Prostate gland (tissue), 2 donors: ENCODE measurements at regions of chr11 and their contacts with region 1.

Region 1: GRCh38 chr11:18731949-18732821 is 6.2 kb upstream of the IGSF22 start:
- DNase-seq: peak; percentile 41
- H3K4me3 ChIP-seq: no peak overlapping the region
- H3K27ac ChIP-seq: no peak overlapping the region
- H3K4me1 ChIP-seq: no peaks in the 10 kb centered on the region
- H3K27me3 ChIP-seq: no peaks in the 10 kb centered on the region
- CTCF ChIP-seq: peak; percentile 80 to 94 (median 84)
- POLR2A ChIP-seq: no peak

Region 2: DNA sequence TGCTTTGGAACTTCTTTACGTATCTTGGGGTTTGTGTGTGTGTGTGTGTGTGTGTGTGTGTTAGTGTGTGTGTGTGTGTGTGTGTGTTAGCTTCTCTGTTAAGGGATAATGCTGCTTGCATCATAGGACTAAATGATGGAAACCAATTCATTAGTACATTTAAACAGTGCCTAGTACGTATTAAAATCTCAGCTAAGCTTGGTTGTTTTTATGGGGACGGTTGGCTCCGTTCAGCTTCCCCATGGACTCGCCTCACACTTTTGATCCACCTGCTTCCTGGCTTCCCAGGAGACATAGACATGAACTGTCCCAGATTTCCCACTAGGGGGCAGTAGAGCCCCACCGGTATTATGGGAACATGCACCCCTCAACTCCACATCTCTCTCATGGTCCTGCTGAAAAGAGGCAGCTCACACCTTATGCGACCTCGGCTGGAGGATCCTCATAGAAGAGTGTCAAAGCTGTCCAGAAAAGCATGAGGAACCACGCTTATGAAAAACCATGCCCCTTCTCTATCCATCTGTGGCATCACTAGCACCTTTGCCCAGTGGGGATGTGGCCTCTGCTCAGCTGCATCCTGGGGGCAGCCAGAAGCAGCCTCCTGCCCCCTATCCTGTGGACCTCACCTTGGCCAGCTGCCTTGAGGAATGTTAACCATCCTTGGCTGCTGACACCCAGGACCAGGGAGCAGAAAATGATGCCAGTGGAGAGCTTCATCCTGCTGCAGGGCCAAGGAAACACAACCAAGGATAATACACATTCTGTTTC is 616.6 kb before region 1 on chr11:
- intact Hi-C with region 1: loop called (anchors 10 kb)
- DNase-seq: peak; percentile 36
- H3K4me3 ChIP-seq: no peak overlapping the region
- H3K27ac ChIP-seq: no peak overlapping the region
- H3K4me1 ChIP-seq: no peaks in the 10 kb centered on the region
- H3K27me3 ChIP-seq: no peaks in the 10 kb centered on the region
- CTCF ChIP-seq: peak; percentile 62 to 78 (median 76)
- POLR2A ChIP-seq: no peak

Region 3: DNA sequence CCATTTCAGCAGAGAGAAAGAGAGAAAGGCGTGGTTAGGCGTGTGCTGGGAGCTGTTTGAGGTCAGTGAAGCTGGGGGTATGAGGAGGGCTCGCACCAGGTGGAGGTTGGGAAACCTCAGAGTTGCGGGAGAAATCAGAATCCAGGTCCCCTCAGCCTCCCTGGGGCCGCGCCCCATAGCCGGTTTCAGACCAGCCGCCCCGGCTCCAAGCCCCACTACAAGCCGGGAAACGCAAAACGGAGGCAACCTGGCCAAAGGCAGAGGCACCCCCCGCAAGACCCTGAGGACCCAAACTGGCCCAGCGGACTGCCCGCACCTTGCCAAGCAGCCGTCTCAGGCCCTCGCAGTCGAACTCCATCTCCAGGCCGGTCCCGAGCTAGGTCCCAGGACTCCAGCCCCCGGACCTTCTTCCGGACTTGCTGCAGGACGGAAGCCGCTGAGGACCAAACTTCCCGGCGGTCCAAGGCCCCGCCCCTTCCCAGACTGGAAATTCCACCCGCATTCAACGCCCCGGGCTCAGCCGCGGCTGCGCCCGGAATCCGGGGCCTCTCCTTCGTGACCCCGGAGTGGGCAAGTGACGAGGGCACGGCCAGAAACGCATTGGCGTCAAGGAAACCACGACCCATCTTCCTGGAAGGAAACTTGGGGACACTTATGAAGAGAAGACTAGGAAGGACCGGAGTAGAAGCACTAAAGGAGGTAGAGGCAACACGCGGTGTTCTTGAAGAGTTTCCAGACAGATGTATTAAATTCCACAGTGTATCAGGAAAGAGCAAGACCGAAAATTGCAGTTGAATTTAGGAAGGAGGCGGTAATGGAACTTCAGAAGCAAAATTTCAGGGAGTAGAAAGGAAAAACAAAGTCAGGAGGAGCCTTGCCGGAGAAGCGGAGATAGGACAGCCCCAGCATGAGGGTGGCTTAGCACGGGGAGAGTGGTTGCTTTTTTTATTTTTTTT is 143.6 kb before region 1 on chr11 and contains the start of gene UEVLD:
- intact Hi-C with region 1: loop called (anchors 5 kb)
- DNase-seq: peak; percentile 85
- H3K4me3 ChIP-seq: peak within 1 kb of the TSS; percentile 62 to 77
- H3K27ac ChIP-seq: peak within 1 kb of the TSS; percentile 73 to 77
- H3K4me1 ChIP-seq: no peaks in the 10 kb centered on the region
- H3K27me3 ChIP-seq: no peaks in the 10 kb centered on the region
- CTCF ChIP-seq: peak in 1 of 4 experiments; percentile 19
- POLR2A ChIP-seq: peak; percentile 55
- total RNA-seq, gene UEVLD: 28.1 to 37.1 TPM